ENCODE measurements at regions of chr7 and their contacts with region 1.

Region 1: GRCh38 chr7:140003913-140004382 is 58.8 kb downstream of the PARP12 start:
- DNase-seq: peak; percentile 79

Region 2: GRCh38 chr7:139482662-139483469 is 521.1 kb before region 1 on chr7:
- in situ Hi-C with region 1: loop called (anchors 25 kb)
- DNase-seq: no peak

Region 3: DNA sequence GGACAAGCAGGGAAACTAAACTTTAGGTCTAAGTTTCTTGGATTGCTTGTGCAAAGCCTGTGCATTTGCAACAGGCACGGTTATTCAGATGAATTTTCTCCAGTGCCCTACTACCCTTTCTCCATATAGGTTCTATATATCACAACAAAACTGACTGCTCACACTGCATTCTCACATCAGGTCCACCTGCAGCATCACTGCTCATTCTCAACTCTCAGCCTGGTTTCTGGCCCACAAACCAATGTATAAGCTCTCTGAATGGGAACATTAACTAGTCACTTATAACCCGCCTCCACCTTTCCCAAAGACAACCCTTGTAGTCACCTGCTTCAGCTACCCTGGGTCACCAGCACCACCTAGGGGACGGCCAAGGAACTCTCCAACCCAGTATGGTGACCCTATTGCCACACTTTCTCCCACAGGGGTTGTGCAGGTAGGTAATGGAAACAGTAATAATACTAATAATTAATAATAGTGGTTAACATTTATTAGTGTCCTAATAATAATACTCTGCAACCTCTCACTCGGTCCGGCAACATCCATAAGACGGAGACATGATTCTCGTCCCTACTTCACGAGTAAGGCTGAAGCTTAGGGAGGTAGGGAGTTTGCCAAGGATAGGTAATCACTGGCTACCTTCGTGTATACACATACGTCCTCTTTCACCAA is 383.1 kb before region 1 on chr7:
- in situ Hi-C with region 1: loop called (anchors 25 kb)
- DNase-seq: peak; percentile 56

Region 4: GRCh38 chr7:140144821-140145220 is 140.9 kb after region 1 on chr7:
- in situ Hi-C with region 1: no loop called
- DNase-seq: no peak

Measured in ACHN (cell line).